Activated T-helper 1 cell treated with anti-CD3 and anti-CD28 coated beads, Interleukin-12 subunit alpha, Interleukin-12 subunit beta, Interleukin-2, Interleukin-4 antibody, amounts not matched to agents 30 ng/mL and 10 ng/mL and 1 ng/mL, durations not matched to agents 14 hours and 24 hours and 36 hours (primary cell): ENCODE measurements at regions of chr2 and their contacts with region 1.

Region 1: DNA sequence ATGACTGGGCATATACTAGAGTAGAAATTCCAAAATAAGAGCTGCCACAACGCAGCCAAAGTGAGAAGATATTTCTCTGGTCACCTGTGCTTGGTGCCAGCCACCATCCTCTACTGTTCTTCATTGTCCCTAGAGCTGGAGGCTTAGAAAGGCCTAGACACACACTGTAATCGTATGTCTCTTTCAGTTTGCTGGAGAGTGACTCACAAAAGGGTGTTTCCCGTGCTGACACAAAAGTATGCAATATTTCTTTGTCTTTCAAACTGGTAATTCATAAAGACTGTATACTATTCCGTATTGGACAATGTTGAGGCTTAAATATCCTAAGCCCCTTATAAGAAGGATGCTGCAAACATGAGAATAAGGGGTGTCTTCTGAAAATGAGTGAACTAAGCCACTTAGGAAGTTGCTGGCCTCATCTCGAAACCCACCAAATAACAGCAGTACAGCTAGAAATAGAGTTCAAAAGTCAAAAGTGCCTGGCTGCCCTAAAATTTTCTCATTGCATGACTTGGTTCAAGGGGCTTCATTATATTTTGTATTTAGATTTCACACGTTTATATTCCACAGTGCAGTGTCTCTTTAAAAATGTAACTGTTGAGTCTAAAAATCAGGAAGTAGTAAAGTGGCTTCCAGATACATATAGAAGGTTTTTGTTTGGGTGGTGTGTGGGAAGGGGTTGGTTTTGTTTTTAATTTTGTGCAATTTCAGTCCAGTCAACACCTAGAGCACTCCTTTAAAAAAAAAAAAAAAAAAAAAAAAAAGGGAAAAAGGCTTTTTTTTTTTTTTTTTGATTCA is 601.1 kb downstream of the ARHGAP15 start:
- DNase-seq: no peak
- H3K4me3 Mint-ChIP-seq: peak overlapping the region; percentile 49
- H3K27ac Mint-ChIP-seq: peak overlapping the region; percentile 92
- H3K4me1 Mint-ChIP-seq: peaks cover 58% of the 10 kb centered on the region
- H3K27me3 Mint-ChIP-seq: no peaks in the 10 kb centered on the region

Region 2: DNA sequence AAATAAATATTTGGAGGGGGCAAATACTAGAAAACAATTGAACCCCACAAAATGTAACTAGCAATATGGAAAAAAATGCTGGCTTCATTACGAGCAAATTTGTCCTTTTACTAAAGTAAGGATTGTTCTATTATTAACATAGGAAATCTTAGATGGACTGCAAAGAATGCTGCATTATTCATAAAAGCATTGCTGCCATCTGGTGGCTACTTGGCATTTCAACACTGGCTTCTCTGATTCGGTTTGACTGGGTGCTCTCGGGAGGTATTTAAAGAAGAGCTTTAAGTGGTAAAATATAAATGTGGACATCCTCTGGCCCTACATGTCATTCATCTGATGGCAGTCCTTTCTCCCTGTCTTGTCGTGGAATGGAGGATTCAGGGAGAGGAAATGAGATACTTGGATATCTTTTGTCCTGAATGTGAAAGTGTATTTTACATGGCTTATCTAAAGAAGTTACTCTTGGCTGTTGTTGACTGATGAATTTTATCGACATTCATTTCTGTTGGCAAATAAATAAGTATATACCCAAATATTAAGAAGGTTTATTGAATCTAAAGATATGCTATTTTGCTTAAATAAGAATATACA is 470.9 kb before region 1 on chr2:
- intact Hi-C with region 1: loop called (anchors 5 kb)
- DNase-seq: peak; percentile 64
- H3K4me3 Mint-ChIP-seq: peak overlapping the region; percentile 78
- H3K27ac Mint-ChIP-seq: peak overlapping the region; percentile 97
- H3K4me1 Mint-ChIP-seq: peaks cover 85% of the 10 kb centered on the region
- H3K27me3 Mint-ChIP-seq: no peaks in the 10 kb centered on the region

Region 3: GRCh38 chr2:143629340-143629739 is 101.0 kb before region 1 on chr2:
- intact Hi-C with region 1: loop called (anchors 5 kb)
- DNase-seq: no peak
- H3K4me3 Mint-ChIP-seq: no peak overlapping the region
- H3K27ac Mint-ChIP-seq: no peak overlapping the region
- H3K4me1 Mint-ChIP-seq: peaks cover 24% of the 10 kb centered on the region
- H3K27me3 Mint-ChIP-seq: no peaks in the 10 kb centered on the region

Region 4: DNA sequence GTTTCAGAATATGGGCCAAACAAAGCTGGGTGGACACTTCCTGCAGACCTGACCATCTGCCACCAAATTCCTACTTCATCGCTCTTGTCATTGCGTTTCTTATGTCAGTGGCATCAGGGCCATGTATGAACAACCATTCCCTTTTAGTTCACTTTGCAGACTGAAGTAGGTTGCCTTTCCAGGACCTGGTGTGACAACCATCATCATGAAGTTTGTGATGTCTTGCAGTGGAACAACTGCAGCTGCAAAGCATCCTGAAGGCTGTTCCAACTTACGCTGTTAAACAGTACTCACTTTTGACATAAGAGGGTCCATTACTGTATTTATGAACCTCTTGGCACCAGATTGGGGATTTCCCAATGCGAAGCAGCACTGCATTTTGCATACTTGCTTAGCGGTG is 89.5 kb before region 1 on chr2:
- intact Hi-C with region 1: no loop called
- DNase-seq: no peak
- H3K4me3 Mint-ChIP-seq: no peak overlapping the region
- H3K27ac Mint-ChIP-seq: no peak overlapping the region
- H3K4me1 Mint-ChIP-seq: peaks cover 10% of the 10 kb centered on the region
- H3K27me3 Mint-ChIP-seq: no peaks in the 10 kb centered on the region

Region 5: DNA sequence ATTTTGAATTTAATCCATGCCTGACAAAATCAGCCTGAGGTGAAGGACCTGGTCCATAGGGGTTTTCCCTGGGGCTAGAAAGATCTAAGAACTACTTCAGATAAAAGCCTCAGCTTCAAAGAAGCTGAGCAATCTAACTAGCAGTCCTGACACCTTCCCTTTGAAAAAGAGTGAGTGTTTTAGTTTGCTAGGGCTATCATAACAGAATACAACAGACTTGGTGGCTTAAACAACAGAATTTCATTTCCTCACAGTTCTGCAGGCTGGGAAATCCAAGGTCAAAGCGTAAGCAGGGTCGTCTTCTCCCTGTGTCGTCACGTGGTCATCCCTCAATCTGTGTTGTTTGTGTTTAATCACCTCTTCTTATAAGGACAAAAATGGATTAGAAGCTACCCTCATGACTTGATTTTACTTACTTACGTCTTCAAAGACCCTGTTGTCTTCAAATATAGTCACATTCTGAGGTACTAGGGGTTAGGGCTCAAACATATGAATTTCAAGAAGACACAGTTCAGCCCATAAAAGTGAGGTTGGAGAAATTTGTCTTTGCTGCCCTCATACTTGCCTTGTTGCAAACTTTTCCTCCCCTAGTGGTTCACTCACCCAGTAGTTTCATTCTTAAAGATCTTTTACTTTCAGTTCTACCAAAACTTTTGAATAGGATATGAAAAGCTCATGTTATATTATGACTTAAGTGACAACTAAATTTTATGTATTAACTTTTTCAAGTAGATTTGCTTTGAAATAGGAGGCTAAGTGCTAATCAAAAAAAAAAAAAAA is 72.7 kb after region 1 on chr2:
- intact Hi-C with region 1: loop called (anchors 5 kb)
- DNase-seq: no peak
- H3K4me3 Mint-ChIP-seq: no peak overlapping the region
- H3K27ac Mint-ChIP-seq: peak overlapping the region; percentile 49
- H3K4me1 Mint-ChIP-seq: peaks cover 10% of the 10 kb centered on the region
- H3K27me3 Mint-ChIP-seq: peaks cover 2% of the 10 kb centered on the region

Region 6: GRCh38 chr2:143936848-143937722 is 206.7 kb after region 1 on chr2:
- intact Hi-C with region 1: no loop called
- DNase-seq: no peak
- H3K4me3 Mint-ChIP-seq: peak overlapping the region; percentile 70
- H3K27ac Mint-ChIP-seq: no peak overlapping the region
- H3K4me1 Mint-ChIP-seq: peaks cover 14% of the 10 kb centered on the region
- H3K27me3 Mint-ChIP-seq: peaks cover 68% of the 10 kb centered on the region

Region 7: GRCh38 chr2:144325086-144325485 is 594.7 kb after region 1 on chr2:
- intact Hi-C with region 1: loop called (anchors 2 kb)
- DNase-seq: peak; percentile 55
- H3K4me3 Mint-ChIP-seq: peak overlapping the region; percentile 72
- H3K27ac Mint-ChIP-seq: peak overlapping the region; percentile 97
- H3K4me1 Mint-ChIP-seq: peaks cover 81% of the 10 kb centered on the region
- H3K27me3 Mint-ChIP-seq: no peaks in the 10 kb centered on the region